Activated T-helper 2 cell treated with anti-CD3 and anti-CD28 coated beads, Interferon-gamma antibody, Interleukin-2, Interleukin-4, amounts not matched to agents 10 μg/mL and 5 μg/mL and 100 μg/mL, durations not matched to agents 14 hours and 24 hours and 36 hours (primary cell): ENCODE measurements at regions of chr7 and their contacts with region 1.

Region 1: GRCh38 chr7:50335795-50336754 is 31.6 kb downstream of the IKZF1 start:
- DNase-seq: peak; percentile 77
- H3K4me3 Mint-ChIP-seq: no peak overlapping the region
- H3K27ac Mint-ChIP-seq: no peak overlapping the region
- H3K4me1 Mint-ChIP-seq: peaks cover 62% of the 10 kb centered on the region
- H3K27me3 Mint-ChIP-seq: no peaks in the 10 kb centered on the region

Region 2: DNA sequence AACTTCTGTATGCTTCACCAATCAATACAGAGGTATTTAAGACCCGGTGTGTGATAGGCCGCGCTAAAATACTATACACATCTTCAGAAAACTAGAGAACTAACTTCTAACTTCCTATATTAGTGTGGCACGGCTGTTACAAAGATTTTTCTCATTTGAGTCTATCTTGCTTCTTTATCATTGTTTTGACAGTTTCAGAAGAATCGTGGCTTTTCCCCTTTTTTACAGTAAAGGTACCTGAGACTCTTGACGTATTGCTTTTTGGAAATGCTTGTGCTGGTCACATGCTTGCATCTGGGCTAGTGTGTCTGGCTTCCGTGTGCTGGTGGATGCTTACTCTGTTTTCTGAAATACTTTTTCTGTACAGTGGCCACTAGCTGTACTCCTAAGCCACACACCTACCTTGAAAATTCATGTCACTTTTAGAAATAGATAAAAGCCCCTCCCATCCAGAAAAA is 18.8 kb before region 1 on chr7:
- intact Hi-C with region 1: loop called (anchors 1 kb)
- DNase-seq: peak; percentile 52
- H3K4me3 Mint-ChIP-seq: peak overlapping the region; percentile 78
- H3K27ac Mint-ChIP-seq: peak overlapping the region; percentile 92
- H3K4me1 Mint-ChIP-seq: peaks cover 90% of the 10 kb centered on the region
- H3K27me3 Mint-ChIP-seq: no peaks in the 10 kb centered on the region

Region 3: DNA sequence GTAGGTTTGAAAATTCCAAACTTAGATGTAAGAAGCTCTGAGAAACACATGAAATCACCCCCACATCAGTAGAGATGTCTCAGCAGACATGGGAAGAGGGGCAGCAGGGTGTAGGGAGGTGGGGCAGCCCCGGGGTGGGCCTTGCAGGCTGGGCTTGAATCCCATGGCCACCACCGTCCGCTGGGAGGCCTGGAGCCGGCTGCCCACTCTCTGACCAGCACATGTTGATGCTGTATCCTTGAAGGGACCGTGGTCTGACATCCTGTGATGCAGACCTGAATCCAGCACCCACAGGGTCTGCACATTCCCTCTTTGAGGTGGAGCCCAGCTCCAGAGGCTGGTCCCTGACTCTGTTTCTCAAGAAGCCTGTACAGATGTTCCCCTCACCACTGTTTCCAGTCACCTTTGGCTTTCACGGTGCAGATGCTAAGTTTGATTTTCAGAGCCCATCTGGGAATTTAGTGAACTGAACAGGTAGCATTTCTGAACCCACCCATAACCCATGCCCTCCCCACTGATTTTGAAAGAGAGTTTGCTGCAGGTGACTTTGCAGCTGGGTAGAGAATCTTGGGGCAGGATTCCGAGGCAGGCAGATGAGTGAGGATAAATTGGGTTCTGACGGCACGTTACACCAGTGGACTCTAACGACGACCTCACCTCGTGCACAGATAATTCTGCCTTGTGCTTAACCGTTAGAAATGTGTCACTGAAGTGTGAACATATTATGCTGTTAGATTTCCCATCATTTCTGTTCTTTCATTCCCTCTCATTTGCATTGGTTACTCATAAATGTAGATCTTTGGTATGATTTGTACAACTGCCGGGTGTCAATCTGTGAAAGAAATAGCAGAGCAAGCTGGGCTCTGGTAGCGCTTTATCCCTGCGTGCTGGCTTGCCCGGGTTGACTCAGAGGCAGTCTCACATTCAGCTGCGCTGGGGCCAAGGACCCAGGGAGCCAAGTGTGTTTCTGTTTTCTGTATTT is 14.2 kb after region 1 on chr7:
- intact Hi-C with region 1: loop called (anchors 1 kb)
- DNase-seq: peak; percentile 80
- H3K4me3 Mint-ChIP-seq: peak overlapping the region; percentile 49
- H3K27ac Mint-ChIP-seq: peak overlapping the region; percentile 91
- H3K4me1 Mint-ChIP-seq: peaks cover 96% of the 10 kb centered on the region
- H3K27me3 Mint-ChIP-seq: no peaks in the 10 kb centered on the region

Region 4: DNA sequence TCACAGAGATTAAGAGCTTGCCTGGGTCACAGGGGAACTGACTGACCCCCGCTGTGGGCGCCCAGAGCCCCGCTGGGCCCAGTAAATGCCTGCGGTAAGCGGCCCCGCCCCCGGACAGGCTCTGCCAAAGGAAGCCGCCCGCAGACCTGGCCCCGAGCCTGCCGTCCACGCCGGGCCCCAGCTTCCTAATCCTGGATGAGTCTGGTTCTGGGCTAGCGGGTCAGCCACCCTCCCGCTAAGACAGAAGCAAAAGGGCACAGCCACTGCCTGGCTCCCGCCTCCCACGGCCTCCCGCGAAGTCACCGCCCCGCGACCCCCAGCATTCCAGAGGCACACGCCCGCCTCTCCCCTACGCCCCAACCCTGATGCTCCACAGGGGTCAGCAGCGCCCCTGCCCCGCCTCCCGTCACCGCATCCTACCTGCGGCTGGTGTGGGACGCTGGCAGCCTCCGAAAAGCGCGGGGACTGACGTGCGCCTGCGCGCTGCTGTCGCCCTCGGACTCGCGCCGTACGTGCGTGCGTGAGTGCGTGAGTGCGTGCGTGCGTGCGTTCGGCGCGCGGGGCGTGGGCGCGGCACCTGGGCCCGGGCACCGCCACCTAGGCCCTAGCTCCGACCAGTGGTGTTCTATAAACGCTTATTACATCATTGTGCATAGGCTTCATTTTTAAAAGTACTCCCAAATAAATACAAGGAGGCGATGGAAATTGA is 114.0 kb after region 1 on chr7 and contains the start of gene FIGNL1:
- intact Hi-C with region 1: loop called (anchors 5 kb)
- DNase-seq: peak; percentile 81
- H3K4me3 Mint-ChIP-seq: peak within 1 kb of the TSS; percentile 86
- H3K27ac Mint-ChIP-seq: peak within 1 kb of the TSS; percentile 71
- H3K4me1 Mint-ChIP-seq: peaks cover 41% of the 10 kb centered on the region
- H3K27me3 Mint-ChIP-seq: no peaks in the 10 kb centered on the region
- total RNA-seq, gene FIGNL1: 40.0 and 42.5 TPM in 2 replicates